Ovary (tissue), 10 donors: ENCODE measurements at regions of chr17 and their contacts with region 1.

Region 1: DNA sequence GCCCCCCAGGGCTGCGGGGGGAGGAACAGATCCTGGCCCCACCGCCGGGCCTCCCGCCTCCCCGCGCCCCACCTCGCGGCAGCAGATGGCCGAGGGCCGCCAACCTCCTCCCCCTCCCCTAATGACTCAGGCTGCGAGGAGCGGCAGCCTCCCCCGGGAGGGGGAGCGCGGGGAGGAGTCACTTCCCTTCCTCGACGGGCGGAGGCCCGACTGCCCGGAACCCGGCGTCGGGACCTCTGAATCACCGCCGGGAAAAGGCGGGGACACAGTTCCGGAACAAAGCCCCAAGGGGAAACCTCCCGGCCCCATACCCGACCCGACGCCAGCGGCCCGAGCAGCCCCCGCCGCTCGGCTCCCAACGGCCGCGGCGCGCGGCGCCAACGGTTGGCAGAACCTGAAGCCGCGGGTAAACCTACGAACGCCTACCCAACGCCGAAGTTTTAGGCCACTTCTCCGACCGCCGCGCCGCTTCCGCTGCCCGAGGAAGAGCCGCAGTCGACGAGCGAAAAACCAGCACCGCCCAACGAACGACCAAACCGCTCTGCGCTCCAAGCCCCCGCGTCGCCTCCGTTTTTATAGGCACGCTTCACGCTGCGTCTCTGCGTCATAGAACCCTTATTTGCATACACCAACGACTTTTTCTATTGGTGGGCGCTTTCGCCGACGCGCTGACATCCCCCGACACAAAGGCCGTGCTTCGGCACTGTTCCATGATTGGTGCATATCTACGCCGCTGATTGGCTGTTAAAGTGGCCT is 5.2 kb upstream of the UNK start:
- DNase-seq: peak; percentile 96 to 98 (median 98)
- H3K4me3 ChIP-seq: peak overlapping the region; percentile 87
- H3K27ac ChIP-seq: peak overlapping the region; percentile 93 to 95
- H3K4me1 ChIP-seq: peaks cover 13% of the 10 kb centered on the region
- H3K27me3 ChIP-seq: no peaks in the 10 kb centered on the region
- CTCF ChIP-seq: peak in 1 of 3 donors; percentile 43
- EP300 ChIP-seq: peak; percentile 90
- POLR2A ChIP-seq: peak; percentile 100

Region 2: DNA sequence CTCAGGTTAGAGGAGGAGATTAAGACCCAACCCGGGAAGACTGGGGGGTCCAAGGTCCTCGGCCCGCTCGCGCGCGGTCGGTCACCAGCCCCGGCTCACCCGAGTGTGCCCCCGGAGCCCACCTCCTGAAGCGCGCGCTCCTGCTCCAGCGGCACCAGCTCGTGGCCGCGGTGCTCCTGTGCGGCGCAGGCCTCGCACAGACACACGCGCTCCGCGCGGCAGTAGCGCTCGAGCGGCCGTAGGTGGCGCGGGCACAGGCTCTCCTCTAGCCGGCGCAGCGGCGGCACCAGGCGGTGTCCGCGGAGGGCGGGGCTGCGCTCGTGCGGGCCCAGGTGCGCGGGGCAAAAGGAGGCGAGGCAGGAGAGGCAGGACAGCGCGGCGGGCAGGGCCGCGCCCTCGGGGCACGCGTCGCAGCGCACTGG is 98.4 kb after region 1 on chr17:
- intact Hi-C with region 1: loop called in 1 of 4 experiments (anchors 10 kb)
- DNase-seq: peak; percentile 63 to 83 (median 76)
- H3K4me3 ChIP-seq: peak overlapping the region; percentile 48
- H3K27ac ChIP-seq: peak overlapping the region; percentile 83 to 87
- H3K4me1 ChIP-seq: peaks cover 19% of the 10 kb centered on the region
- H3K27me3 ChIP-seq: no peaks in the 10 kb centered on the region
- CTCF ChIP-seq: peak; percentile 43 to 76 (median 67)
- EP300 ChIP-seq: no peak
- POLR2A ChIP-seq: peak; percentile 13